GM12878 (cell line): ENCODE measurements at regions of chr17 and their contacts with region 1.

Region 1: GRCh38 chr17:36148559-36149295 is 27.7 kb downstream of the TBC1D3B start:
- DNase-seq: peak; percentile 57
- ATAC-seq: peak; percentile 97
- H3K4me3 ChIP-seq: no peak overlapping the region
- H3K27ac ChIP-seq: no peak overlapping the region
- H3K4me1 ChIP-seq: peaks cover 8% of the 10 kb centered on the region
- H3K27me3 ChIP-seq: no peaks in the 10 kb centered on the region
- CTCF ChIP-seq: peak; percentile 99; a peak in 5 of 6 replicates
- EP300 ChIP-seq: no peak
- POLR2A ChIP-seq: no peak
- RAD21 ChIP-seq: peak; percentile 100

Region 2: GRCh38 chr17:35849469-35850348 is 299.0 kb before region 1 on chr17:
- CTCF ChIA-PET with region 1: interaction called, 21 read pairs
- POLR2A ChIA-PET with region 1: no interaction called
- RAD21 ChIA-PET with region 1: interaction called, 16 read pairs
- SMC1A ChIA-PET with region 1: no interaction called
- in situ Hi-C with region 1: no loop called
- intact Hi-C with region 1: loop called (anchors 1 kb)
- DNase-seq: peak; percentile 20
- ATAC-seq: peak; percentile 95
- H3K4me3 ChIP-seq: no peak overlapping the region
- H3K27ac ChIP-seq: no peak overlapping the region
- H3K4me1 ChIP-seq: no peaks in the 10 kb centered on the region
- H3K27me3 ChIP-seq: no peaks in the 10 kb centered on the region
- CTCF ChIP-seq: peak; percentile 73 to 79 (median 75)
- EP300 ChIP-seq: no peak
- POLR2A ChIP-seq: no peak
- RAD21 ChIP-seq: peak; percentile 91

Region 3: GRCh38 chr17:35907691-35908090 is 241.0 kb before region 1 on chr17:
- CTCF ChIA-PET with region 1: no interaction called
- POLR2A ChIA-PET with region 1: no interaction called
- RAD21 ChIA-PET with region 1: no interaction called
- SMC1A ChIA-PET with region 1: no interaction called
- in situ Hi-C with region 1: no loop called
- intact Hi-C with region 1: no loop called
- DNase-seq: no peak
- ATAC-seq: no peak
- H3K4me3 ChIP-seq: no peak overlapping the region
- H3K27ac ChIP-seq: no peak overlapping the region
- H3K4me1 ChIP-seq: no peaks in the 10 kb centered on the region
- H3K27me3 ChIP-seq: no peaks in the 10 kb centered on the region
- CTCF ChIP-seq: no peak
- EP300 ChIP-seq: no peak
- POLR2A ChIP-seq: no peak
- RAD21 ChIP-seq: no peak

Region 4: GRCh38 chr17:35969558-35970380 is 179.0 kb before region 1 on chr17:
- CTCF ChIA-PET with region 1: interaction called, 622 read pairs
- POLR2A ChIA-PET with region 1: interaction called, 3 read pairs
- RAD21 ChIA-PET with region 1: interaction called, 342 read pairs
- SMC1A ChIA-PET with region 1: interaction called, 485 read pairs
- in situ Hi-C with region 1: loop called (anchors 5 kb)
- intact Hi-C with region 1: loop called (anchors 1 kb)
- DNase-seq: peak; percentile 45
- ATAC-seq: peak; percentile 92
- H3K4me3 ChIP-seq: no peak overlapping the region
- H3K27ac ChIP-seq: no peak overlapping the region
- H3K4me1 ChIP-seq: no peaks in the 10 kb centered on the region
- H3K27me3 ChIP-seq: no peaks in the 10 kb centered on the region
- CTCF ChIP-seq: peak; percentile 77 to 92 (median 86); a peak in 5 of 6 replicates
- EP300 ChIP-seq: no peak
- POLR2A ChIP-seq: no peak
- RAD21 ChIP-seq: peak; percentile 95

Region 5: DNA sequence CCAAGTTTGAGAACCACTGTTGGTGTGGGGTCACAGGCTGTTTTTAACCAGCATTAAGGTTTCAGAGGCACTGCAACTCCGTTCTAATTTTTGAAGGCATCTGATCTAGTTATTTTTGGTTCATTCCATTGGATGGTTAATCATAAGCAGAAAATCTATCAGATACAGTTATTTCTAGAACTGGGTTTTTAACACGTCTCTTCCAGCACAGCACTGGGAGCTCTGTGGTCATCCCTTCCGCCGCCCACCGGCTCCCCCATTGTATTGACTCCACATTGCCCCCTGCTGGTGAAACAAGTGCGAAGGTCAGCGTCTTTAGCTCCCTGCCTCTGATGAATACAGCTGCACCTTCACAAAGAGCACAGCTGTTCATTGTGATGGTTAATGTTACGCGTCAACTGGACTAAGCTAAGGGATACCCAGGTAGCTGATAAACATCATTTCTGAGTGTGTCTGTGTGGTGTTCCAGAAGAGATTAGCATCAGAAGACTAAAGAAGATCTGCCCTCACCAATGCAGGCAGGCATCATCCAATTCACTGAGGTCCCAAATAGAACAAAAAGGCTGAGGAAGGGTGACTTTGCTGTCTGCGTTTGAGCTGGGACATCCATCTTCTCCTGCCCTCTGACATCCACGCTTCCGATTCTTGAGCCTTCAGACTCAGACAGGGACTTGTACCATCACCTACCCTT is 76.2 kb before region 1 on chr17:
- CTCF ChIA-PET with region 1: interaction called, 201 read pairs
- POLR2A ChIA-PET with region 1: interaction called, 8 read pairs
- RAD21 ChIA-PET with region 1: interaction called, 98 read pairs
- SMC1A ChIA-PET with region 1: interaction called, 206 read pairs
- in situ Hi-C with region 1: no loop called
- intact Hi-C with region 1: loop called (anchors 1 kb)
- DNase-seq: peak; percentile 69
- ATAC-seq: peak; percentile 90
- H3K4me3 ChIP-seq: no peak overlapping the region
- H3K27ac ChIP-seq: no peak overlapping the region
- H3K4me1 ChIP-seq: peaks cover 11% of the 10 kb centered on the region
- H3K27me3 ChIP-seq: no peaks in the 10 kb centered on the region
- CTCF ChIP-seq: peak; percentile 69 to 82 (median 81)
- EP300 ChIP-seq: peak; percentile 82 to 94; a peak in 3 of 4 replicates
- POLR2A ChIP-seq: no peak
- RAD21 ChIP-seq: peak; percentile 73

Region 6: GRCh38 chr17:36117505-36118382 is 31.0 kb before region 1 on chr17:
- CTCF ChIA-PET with region 1: interaction called, 36 read pairs
- POLR2A ChIA-PET with region 1: no interaction called
- RAD21 ChIA-PET with region 1: interaction called, 28 read pairs
- SMC1A ChIA-PET with region 1: interaction called, 33 read pairs
- in situ Hi-C with region 1: no loop called
- intact Hi-C with region 1: no loop called
- DNase-seq: no peak
- ATAC-seq: peak; percentile 89
- H3K4me3 ChIP-seq: no peak overlapping the region
- H3K27ac ChIP-seq: no peak overlapping the region
- H3K4me1 ChIP-seq: peaks cover 18% of the 10 kb centered on the region
- H3K27me3 ChIP-seq: no peaks in the 10 kb centered on the region
- CTCF ChIP-seq: no peak
- EP300 ChIP-seq: no peak; a peak in 1 of 4 replicates
- POLR2A ChIP-seq: no peak
- RAD21 ChIP-seq: no peak

Region 7: DNA sequence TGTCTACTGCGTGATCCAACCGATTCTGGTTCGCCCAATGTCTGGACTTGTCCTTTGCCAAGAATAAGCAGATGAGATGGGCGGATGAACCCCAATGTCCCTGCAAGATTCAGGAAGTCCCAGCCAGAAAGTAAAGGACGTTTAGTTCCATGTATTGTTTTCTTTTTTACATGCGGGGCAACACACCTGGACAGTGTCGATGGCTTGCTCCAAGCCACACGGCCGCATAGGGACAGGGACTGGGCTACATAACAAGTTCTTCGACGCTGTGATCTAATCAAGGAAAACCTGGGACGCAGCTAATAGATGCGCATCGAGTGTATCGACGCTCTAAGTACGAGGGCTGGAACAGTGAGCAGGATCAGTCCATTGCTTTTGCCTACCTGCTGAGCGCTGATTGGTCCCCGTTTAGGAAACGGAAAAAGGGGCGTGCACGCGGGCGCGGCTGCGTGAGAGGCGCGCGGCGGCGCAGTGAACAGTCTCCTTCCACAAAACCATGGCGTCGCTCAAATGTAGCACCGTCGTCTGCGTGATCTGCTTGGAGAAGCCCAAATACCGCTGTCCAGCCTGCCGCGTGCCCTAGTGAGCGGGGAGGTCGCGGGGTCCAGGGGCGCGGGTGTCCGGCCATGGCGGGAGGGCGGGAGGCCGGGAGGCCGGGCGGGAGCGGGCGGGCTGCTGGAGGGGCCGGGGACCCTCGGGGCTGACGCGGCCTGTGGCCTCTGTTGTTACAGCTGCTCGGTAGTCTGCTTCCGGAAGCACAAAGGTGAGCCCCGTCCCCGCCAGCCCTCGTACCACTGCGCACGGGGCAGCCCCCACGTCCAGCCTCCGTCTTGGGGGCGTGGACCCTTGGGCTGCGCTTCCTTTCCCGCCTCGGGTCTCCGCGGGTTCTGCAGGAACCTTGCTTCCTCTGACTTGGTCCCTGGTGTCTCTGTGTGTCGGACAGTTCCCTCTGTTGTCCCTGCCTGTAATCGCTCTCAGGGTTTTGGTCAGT is 337.8 kb after region 1 on chr17 and contains the start of gene ZNHIT3:
- CTCF ChIA-PET with region 1: interaction called, 7 read pairs
- POLR2A ChIA-PET with region 1: no interaction called
- RAD21 ChIA-PET with region 1: interaction called, 4 read pairs
- SMC1A ChIA-PET with region 1: interaction called, 9 read pairs
- in situ Hi-C with region 1: loop called (anchors 25 kb)
- intact Hi-C with region 1: loop called (anchors 10 kb)
- DNase-seq: peak; percentile 80
- ATAC-seq: peak; percentile 97
- H3K4me3 ChIP-seq: peak within 1 kb of the TSS; percentile 90
- H3K27ac ChIP-seq: peak within 1 kb of the TSS; percentile 71
- H3K4me1 ChIP-seq: peaks cover 9% of the 10 kb centered on the region
- H3K27me3 ChIP-seq: peaks cover 0 to 4% of the 10 kb centered on the region in 2 experiments; a peak in 1 of 4 replicates
- CTCF ChIP-seq: no peak
- EP300 ChIP-seq: no peak
- POLR2A ChIP-seq: peak; percentile 91
- RAD21 ChIP-seq: no peak
- polyA plus RNA-seq, gene ZNHIT3: 110 to 128 TPM